HepG2 (cell line): ENCODE measurements at regions of chr3 and their contacts with region 1.

Region 1: DNA sequence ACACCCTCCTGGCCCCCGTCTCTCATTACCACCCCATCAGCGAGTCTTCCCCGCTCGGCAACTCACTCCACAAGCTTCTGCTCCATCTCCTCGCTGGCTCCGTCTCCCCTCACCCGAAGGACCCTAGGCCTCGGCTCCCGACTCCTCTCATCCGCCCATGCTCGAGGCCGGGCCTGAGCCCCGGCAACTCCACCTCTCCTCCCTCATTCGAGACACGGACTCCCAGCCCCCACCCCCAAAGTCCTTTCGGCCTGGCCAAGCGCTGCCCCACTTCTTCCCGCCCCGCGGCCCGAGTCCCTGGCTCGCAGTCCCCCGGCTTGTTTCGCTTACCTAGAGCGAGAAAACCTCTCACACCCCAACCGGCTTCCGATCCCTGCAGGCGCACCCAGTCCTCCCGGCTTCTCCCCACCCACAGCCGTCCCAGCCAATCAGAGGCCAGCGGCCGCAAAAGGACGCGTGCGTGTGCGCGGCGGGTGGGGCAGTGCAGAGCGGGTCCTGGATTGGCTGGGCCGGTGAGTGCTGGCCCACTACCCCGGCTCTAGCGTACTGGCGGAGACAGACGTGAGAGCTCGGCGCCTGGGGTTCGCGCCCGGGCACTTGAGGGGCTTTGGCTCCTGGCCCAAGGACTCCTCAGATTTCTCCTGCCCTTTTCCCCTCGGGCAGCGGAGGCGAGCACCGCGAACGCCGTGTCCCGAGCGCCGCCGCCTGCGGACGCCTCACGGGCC is at the start of gene HIGD1A:
- DNase-seq: peak; percentile 91
- ATAC-seq: peak; percentile 98
- H3K4me3 ChIP-seq: peak within 1 kb of the TSS; percentile 87 to 98 (median 92)
- H3K27ac ChIP-seq: peak within 1 kb of the TSS; percentile 93
- H3K4me1 ChIP-seq: peaks cover 66% of the 10 kb centered on the region
- H3K27me3 ChIP-seq: no peaks in the 10 kb centered on the region; a peak in 1 of 5 replicates
- CTCF ChIP-seq: no peak
- EP300 ChIP-seq: 0 out of 4 replicates have a peak, but pooled peaks of 1 of the 2 experiments have one; percentile 1
- POLR2A ChIP-seq: peak; percentile 82 to 95
- RAD21 ChIP-seq: peak; percentile 24; the same call in 1 of the 2 replicates
- total RNA-seq, gene HIGD1A: 253 and 379 TPM in 2 replicates

Region 2: DNA sequence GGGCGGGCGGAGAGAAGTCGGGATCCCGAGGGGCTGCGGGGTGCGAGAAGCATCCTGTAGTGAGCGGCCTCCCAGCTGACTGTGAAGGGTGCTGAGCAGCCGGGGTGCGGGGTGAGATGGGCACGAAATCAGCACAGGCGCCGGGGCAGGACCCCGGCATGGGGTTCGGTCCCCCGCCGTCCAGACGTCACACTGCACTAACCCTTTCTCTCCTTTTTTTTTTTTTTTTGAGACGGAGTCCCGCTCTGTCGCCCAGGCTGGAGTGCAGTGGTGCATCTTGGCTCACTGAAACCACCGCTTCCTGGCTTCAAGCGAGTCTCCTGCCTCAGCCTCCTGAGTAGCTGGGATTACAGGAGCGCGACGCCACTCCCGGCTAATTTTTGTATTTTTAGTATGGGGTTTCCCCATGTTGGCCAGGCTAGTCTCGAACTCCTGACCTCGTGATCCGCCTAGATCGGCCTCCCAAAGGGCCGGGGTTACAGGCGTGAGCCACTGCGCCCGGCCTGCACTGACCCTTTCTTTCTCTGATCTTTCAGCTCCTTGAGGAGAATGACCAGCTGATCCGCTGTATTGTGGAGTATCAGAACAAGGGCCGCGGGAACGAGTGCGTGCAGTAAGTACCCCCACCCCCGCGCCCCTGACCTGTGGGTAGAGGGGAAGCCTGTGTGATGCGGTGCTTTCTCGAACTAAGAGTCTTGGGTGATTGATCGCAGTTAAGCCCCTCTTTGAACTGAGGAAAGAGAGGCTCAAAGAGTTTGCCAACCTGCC is 213.1 kb before region 1 on chr3:
- CTCF ChIA-PET with region 1: no interaction called
- POLR2A ChIA-PET with region 1: interaction called, 14 read pairs
- in situ Hi-C with region 1: no loop called
- intact Hi-C with region 1: no loop called
- DNase-seq: no peak
- ATAC-seq: no peak; the same call in 2 of the 3 replicates
- H3K4me3 ChIP-seq: peak overlapping the region; percentile 80 to 85 (median 83)
- H3K27ac ChIP-seq: peak overlapping the region; percentile 63
- H3K4me1 ChIP-seq: peaks cover 35% of the 10 kb centered on the region
- H3K27me3 ChIP-seq: no peaks in the 10 kb centered on the region; a peak in 1 of 5 replicates
- CTCF ChIP-seq: no peak
- EP300 ChIP-seq: no peak
- POLR2A ChIP-seq: no peak
- RAD21 ChIP-seq: no peak

Region 3: GRCh38 chr3:42749753-42750231 is 54.5 kb before region 1 on chr3:
- CTCF ChIA-PET with region 1: no interaction called
- POLR2A ChIA-PET with region 1: interaction called, 35 read pairs
- in situ Hi-C with region 1: no loop called
- intact Hi-C with region 1: no loop called
- DNase-seq: no peak
- ATAC-seq: peak; percentile 76
- H3K4me3 ChIP-seq: no peak overlapping the region; a peak in 1 of 6 replicates
- H3K27ac ChIP-seq: no peak overlapping the region
- H3K4me1 ChIP-seq: peaks cover 54% of the 10 kb centered on the region
- H3K27me3 ChIP-seq: no peaks in the 10 kb centered on the region
- CTCF ChIP-seq: peak; percentile 64
- EP300 ChIP-seq: no peak
- POLR2A ChIP-seq: no peak
- RAD21 ChIP-seq: peak; percentile 49

Region 4: DNA sequence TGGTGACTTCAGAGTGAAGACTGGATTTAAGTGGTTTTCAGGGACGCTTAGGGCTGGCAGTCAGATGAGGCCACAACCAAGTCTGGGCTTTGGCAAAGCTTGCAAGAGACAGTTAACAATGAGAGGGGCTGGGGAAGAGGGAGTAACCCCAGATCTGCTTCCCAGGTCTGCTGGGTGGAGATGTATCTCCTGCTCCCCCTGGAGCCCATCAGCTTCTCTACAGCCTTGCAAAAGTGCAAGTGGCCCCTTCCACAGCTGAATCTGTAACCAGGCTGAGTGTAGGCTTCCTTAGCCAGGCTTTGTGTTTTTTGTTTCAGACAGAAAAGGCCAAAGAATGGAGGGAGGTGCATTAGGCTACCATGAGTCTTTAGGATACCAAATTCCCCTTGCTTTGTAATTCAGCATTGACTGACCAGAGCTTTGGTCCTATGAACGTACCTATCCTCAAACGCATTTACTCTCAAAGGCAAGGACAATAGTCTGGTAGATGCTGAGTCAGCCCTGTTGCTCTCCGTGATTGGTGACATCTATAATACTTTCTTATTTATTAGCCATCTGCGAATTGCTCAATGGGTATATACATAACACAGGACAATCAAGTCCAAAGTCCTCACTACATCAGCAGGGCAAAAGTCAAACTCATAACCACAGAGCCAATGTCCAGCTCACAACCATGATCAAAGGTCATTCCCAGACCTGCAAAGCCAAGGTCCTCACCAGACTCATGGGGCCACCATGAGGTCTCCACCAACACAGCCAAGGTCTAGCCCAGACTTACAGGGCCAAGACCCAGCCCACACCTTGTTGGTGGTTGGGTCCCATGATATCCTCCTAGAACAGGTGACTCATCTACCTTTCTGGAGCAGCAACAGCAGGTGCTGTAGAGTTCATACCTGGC is 48.3 kb before region 1 on chr3:
- CTCF ChIA-PET with region 1: no interaction called
- POLR2A ChIA-PET with region 1: interaction called, 35 read pairs
- in situ Hi-C with region 1: no loop called
- intact Hi-C with region 1: loop called (anchors 2 kb)
- DNase-seq: peak; percentile 91
- ATAC-seq: peak; percentile 88
- H3K4me3 ChIP-seq: peak overlapping the region in 1 of 3 experiments; percentile 18; a peak in 1 of 6 replicates
- H3K27ac ChIP-seq: peak overlapping the region; percentile 87
- H3K4me1 ChIP-seq: peaks cover 29% of the 10 kb centered on the region
- H3K27me3 ChIP-seq: no peaks in the 10 kb centered on the region
- CTCF ChIP-seq: peak; percentile 77
- EP300 ChIP-seq: peak; percentile 80 to 92; a peak in 3 of 4 replicates
- POLR2A ChIP-seq: no peak
- RAD21 ChIP-seq: no peak; the same call in 1 of the 2 replicates

Region 5: GRCh38 chr3:42819351-42819965 is 15.2 kb after region 1 on chr3:
- CTCF ChIA-PET with region 1: no interaction called
- POLR2A ChIA-PET with region 1: interaction called, 61 read pairs
- in situ Hi-C with region 1: no loop called
- intact Hi-C with region 1: no loop called
- DNase-seq: peak; percentile 78
- ATAC-seq: peak; percentile 92
- H3K4me3 ChIP-seq: no peak overlapping the region
- H3K27ac ChIP-seq: peak overlapping the region; percentile 54
- H3K4me1 ChIP-seq: peaks cover 81% of the 10 kb centered on the region
- H3K27me3 ChIP-seq: no peaks in the 10 kb centered on the region
- CTCF ChIP-seq: peak; percentile 57
- EP300 ChIP-seq: no peak
- POLR2A ChIP-seq: no peak
- RAD21 ChIP-seq: no peak

Region 6: DNA sequence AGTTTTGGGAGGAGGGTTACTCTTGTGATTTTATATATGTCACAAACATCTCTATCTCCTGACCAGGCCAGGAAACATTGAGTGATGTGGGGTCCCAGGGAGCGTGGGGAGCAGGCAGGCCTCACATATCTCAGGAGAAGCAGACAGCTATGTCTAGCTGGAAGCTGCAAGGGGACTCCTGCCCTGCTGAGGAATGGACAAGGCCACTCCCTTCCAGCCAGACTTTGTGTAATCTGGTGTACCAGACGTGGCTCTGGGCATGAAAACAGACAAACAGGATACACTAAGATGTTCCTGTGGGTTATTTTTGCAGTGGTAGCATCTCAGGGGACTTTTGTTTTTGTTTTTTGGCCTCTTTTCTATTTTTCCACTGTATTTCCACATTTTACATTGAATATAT is 48.2 kb after region 1 on chr3:
- CTCF ChIA-PET with region 1: no interaction called
- POLR2A ChIA-PET with region 1: interaction called, 13 read pairs
- in situ Hi-C with region 1: no loop called
- intact Hi-C with region 1: loop called (anchors 1 kb)
- DNase-seq: no peak
- ATAC-seq: no peak
- H3K4me3 ChIP-seq: no peak overlapping the region
- H3K27ac ChIP-seq: peak overlapping the region; percentile 98
- H3K4me1 ChIP-seq: peaks cover 95% of the 10 kb centered on the region
- H3K27me3 ChIP-seq: no peaks in the 10 kb centered on the region
- CTCF ChIP-seq: no peak
- EP300 ChIP-seq: no peak
- POLR2A ChIP-seq: no peak
- RAD21 ChIP-seq: no peak

Region 7: GRCh38 chr3:42875325-42876151 is 71.3 kb after region 1 on chr3 and contains the start of gene CYP8B1:
- CTCF ChIA-PET with region 1: no interaction called
- POLR2A ChIA-PET with region 1: interaction called, 15 read pairs
- in situ Hi-C with region 1: no loop called
- intact Hi-C with region 1: no loop called
- DNase-seq: peak; percentile 74
- ATAC-seq: peak; percentile 93
- H3K4me3 ChIP-seq: no peak within 1 kb of the TSS; a peak in 1 of 6 replicates
- H3K27ac ChIP-seq: peak within 1 kb of the TSS; percentile 68
- H3K4me1 ChIP-seq: peaks cover 78% of the 10 kb centered on the region
- H3K27me3 ChIP-seq: no peaks in the 10 kb centered on the region
- CTCF ChIP-seq: no peak
- EP300 ChIP-seq: peak in 1 of 2 experiments; percentile 70; a peak in 2 of 4 replicates
- POLR2A ChIP-seq: 0 out of 4 replicates have a peak, but pooled peaks of 1 of the 2 experiments have one; percentile 58
- RAD21 ChIP-seq: 0 out of 2 replicates have a peak, but pooled peaks have one; percentile 11
- total RNA-seq, gene CYP8B1: 0.58 and 0.90 TPM in 2 replicates

Region 8: GRCh38 chr3:43076857-43077256 is 272.6 kb after region 1 on chr3:
- CTCF ChIA-PET with region 1: no interaction called
- POLR2A ChIA-PET with region 1: no interaction called
- in situ Hi-C with region 1: no loop called
- intact Hi-C with region 1: no loop called
- DNase-seq: no peak
- ATAC-seq: no peak
- H3K4me3 ChIP-seq: no peak overlapping the region
- H3K27ac ChIP-seq: no peak overlapping the region
- H3K4me1 ChIP-seq: no peaks in the 10 kb centered on the region
- H3K27me3 ChIP-seq: no peaks in the 10 kb centered on the region
- CTCF ChIP-seq: no peak
- EP300 ChIP-seq: no peak
- POLR2A ChIP-seq: no peak
- RAD21 ChIP-seq: no peak

Region 9: GRCh38 chr3:43162230-43163084 is 358.2 kb after region 1 on chr3:
- CTCF ChIA-PET with region 1: no interaction called
- POLR2A ChIA-PET with region 1: no interaction called
- in situ Hi-C with region 1: no loop called
- intact Hi-C with region 1: no loop called
- DNase-seq: peak; percentile 24
- ATAC-seq: peak; percentile 62
- H3K4me3 ChIP-seq: no peak overlapping the region
- H3K27ac ChIP-seq: no peak overlapping the region
- H3K4me1 ChIP-seq: no peaks in the 10 kb centered on the region
- H3K27me3 ChIP-seq: peaks cover 0 to 8% of the 10 kb centered on the region in 2 experiments; a peak in 4 of 5 replicates
- CTCF ChIP-seq: peak; percentile 53
- EP300 ChIP-seq: no peak
- POLR2A ChIP-seq: no peak
- RAD21 ChIP-seq: no peak

Region 10: GRCh38 chr3:43223670-43224364 is 419.5 kb after region 1 on chr3:
- CTCF ChIA-PET with region 1: no interaction called
- POLR2A ChIA-PET with region 1: no interaction called
- in situ Hi-C with region 1: no loop called
- intact Hi-C with region 1: no loop called
- DNase-seq: no peak
- ATAC-seq: no peak
- H3K4me3 ChIP-seq: no peak overlapping the region
- H3K27ac ChIP-seq: no peak overlapping the region
- H3K4me1 ChIP-seq: no peaks in the 10 kb centered on the region
- H3K27me3 ChIP-seq: peaks cover 0 to 3% of the 10 kb centered on the region in 2 experiments; a peak in 2 of 5 replicates
- CTCF ChIP-seq: no peak
- EP300 ChIP-seq: no peak
- POLR2A ChIP-seq: no peak
- RAD21 ChIP-seq: no peak